ENCODE measurements at regions of chr16 and their contacts with region 1.

Region 1: DNA sequence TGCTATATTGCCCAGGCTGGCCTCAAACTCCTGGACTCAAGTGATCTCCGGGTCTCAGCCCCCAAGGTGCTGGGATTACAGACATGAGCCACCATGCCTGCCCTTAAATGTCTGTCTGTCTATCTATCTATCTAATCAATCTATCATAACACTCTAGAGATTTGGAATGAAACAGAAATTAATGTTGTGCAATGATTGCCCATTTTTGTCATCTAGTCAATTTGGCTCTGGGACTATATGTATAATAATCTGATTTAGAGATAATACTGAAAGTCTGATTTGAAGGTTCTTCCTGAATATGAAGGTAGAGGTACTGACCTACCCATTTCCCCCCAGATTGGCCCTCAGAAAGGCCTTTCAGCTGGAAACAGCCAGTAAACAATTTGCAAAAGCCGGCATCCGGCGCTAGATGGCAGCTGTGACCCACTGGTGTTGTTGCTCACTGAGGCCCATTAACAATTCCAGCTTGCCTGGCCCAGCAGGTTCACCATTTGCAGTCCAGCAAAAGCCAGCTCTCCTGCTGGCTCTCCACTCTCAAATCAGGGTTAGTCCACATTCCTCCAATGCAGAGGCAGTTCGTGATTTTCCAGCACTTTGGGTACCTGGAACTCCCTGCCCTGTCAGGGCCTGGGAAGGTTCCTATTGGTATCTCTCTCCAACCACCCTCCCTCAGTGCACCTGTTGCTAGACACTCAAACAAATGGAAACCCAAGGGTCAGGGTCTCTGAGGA is 22.9 kb upstream of the C16orf87 start:
- DNase-seq: peak; percentile 87 to 91 (median 88)
- H3K4me3 ChIP-seq: no peak overlapping the region
- H3K27ac ChIP-seq: no peak overlapping the region
- H3K4me1 ChIP-seq: peaks cover 0 to 6% (median 3%) of the 10 kb centered on the region in 3 donors
- H3K27me3 ChIP-seq: no peaks in the 10 kb centered on the region
- CTCF ChIP-seq: peak; percentile 88

Region 2: GRCh38 chr16:46908540-46909372 is 54.9 kb after region 1 on chr16:
- intact Hi-C with region 1: loop called (anchors 5 kb)
- DNase-seq: peak in 4 of 5 donors; percentile 75 to 89 (median 78)
- H3K4me3 ChIP-seq: no peak overlapping the region
- H3K27ac ChIP-seq: no peak overlapping the region
- H3K4me1 ChIP-seq: no peaks in the 10 kb centered on the region
- H3K27me3 ChIP-seq: no peaks in the 10 kb centered on the region
- CTCF ChIP-seq: peak; percentile 62

Measured in kidney (tissue), 22 donors.